Dorsolateral prefrontal cortex (tissue), 120 donors: ENCODE measurements at regions of chr11 and their contacts with region 1.

Region 1: GRCh38 chr11:58579192-58580129 is 598 bp downstream of the ZFP91 start:
- DNase-seq: peak; percentile 83 to 94 (median 91)
- H3K4me3 ChIP-seq: peak overlapping the region; percentile 63 to 99 (median 94)
- H3K27ac ChIP-seq: peak overlapping the region; percentile 92 to 100 (median 100)
- H3K27me3 ChIP-seq: no peaks in the 10 kb centered on the region
- CTCF ChIP-seq: peak; percentile 67 to 97 (median 87)

Region 2: DNA sequence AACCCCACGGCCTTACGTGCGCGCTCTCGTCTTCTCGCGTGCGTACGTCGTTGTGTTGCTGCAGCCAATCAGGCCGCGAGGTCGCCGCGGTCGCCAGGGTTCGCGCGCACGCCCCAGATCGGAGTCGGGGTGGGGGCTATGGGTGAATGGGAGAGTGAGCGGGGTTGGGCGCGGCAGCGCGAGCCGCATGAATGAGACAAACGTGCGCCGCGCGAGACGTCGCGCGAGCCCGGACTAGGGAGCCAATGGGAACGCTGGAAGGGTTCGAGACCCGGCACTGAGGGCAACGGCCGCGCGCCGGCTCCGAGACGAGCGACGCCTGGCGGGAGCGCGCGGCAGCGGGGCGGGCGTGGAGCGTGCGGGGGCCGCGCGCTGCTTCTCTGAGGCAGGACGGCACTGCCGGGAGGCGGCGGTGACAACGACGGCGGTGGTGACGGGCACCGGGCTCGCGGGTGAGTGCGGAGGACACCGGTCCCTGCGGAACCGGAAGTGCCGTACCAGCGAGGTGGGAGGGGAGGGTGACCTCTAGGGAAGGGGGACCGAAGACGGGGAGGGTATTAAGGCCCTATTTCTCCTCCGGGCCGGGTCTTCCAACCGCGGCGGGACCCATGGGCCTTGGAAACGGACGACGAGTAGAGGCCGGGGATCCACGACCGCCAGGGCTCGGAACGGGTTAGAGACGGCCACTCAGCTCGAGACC is 911.6 kb before region 1 on chr11 and contains the start of gene ZDHHC5:
- intact Hi-C with region 1: loop called (anchors 2 to 5 kb)
- DNase-seq: peak; percentile 98 to 100 (median 99)
- H3K4me3 ChIP-seq: peak within 1 kb of the TSS; percentile 73 to 100 (median 96)
- H3K27ac ChIP-seq: peak within 1 kb of the TSS; percentile 93 to 100 (median 99)
- H3K27me3 ChIP-seq: no peaks in the 10 kb centered on the region
- CTCF ChIP-seq: peak in 55 of 56 donors; percentile 19 to 80 (median 60)
- total RNA-seq, gene ZDHHC5: 21.3 to 46.9 (median 34.3) TPM

Region 3: DNA sequence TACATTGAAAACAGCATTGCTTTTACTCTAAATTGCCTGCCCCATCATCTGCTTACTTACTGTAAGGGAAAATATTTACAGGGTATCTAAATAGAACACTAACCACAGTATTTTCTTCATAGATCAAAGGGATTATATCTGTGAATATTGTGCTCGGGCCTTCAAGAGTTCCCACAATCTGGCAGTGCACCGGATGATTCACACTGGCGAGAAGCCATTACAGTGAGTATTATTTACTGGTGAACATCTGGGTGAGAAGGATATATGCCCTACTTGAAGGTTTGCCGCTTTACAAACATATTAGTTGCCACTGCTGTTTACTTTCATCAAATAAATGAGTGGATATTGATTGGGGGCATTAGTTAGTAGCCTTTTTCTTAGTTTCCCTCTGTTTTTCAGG is 37.1 kb after region 1 on chr11:
- intact Hi-C with region 1: loop called in 1 of 2 experiments (anchors 5 kb)
- DNase-seq: no peak
- H3K4me3 ChIP-seq: no peak overlapping the region
- H3K27ac ChIP-seq: peak overlapping the region in 24 of 59 donors; percentile 4 to 84 (median 31)
- H3K27me3 ChIP-seq: no peaks in the 10 kb centered on the region
- CTCF ChIP-seq: no peak

Region 4: GRCh38 chr11:58647141-58647699 is 67.8 kb after region 1 on chr11:
- intact Hi-C with region 1: no loop called
- DNase-seq: no peak
- H3K4me3 ChIP-seq: no peak overlapping the region
- H3K27ac ChIP-seq: no peak overlapping the region
- H3K27me3 ChIP-seq: no peaks in the 10 kb centered on the region
- CTCF ChIP-seq: no peak

Region 5: DNA sequence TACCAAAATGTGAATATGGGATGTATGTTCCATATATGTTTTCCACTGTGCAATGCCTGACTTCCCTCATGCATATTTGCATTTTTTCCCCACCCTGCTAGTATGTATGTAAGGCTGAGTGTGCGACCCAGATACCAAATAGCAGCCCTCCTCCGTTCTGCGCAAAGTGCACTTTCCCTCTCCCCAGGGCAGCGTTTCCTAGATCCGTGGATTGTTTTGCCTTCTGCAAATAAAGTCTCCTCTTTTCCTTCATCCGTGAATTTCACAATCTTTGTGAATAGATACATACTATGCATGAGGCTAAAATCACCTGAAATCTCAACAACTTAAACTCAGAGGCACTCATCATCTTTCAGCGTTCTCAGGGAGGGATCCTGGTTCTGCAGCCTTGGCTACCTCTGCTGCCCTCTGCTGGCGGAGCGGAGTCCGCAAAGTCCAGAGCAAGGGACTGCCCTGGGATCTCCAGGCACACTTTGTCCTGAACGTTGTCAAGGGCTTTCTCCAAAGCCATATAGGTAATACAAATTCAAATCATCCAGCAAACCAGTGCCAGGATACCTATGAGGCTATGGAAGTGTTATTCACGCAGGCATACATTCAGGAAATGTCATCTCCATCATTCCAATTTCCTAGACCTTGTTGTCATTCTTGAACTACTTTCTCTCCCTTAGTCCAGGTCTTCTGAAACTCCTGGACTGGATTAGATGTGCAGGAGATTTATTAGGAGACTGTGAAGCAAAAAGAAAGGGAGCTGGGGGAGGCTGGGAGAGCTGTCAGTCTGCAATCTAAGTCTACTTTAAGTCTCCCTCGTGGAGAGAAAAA is 96.1 kb after region 1 on chr11:
- intact Hi-C with region 1: loop called (anchors 5 to 10 kb)
- DNase-seq: peak; percentile 44 to 86 (median 78)
- H3K4me3 ChIP-seq: peak overlapping the region in 1 of 59 donors; percentile 15
- H3K27ac ChIP-seq: no peak overlapping the region
- H3K27me3 ChIP-seq: peaks cover 0 to 16% (median 6%) of the 10 kb centered on the region in 45 donors
- CTCF ChIP-seq: peak; percentile 56 to 94 (median 88)

Region 6: GRCh38 chr11:58900479-58901420 is 321.3 kb after region 1 on chr11:
- intact Hi-C with region 1: loop called in 1 of 2 experiments (anchors 10 kb)
- DNase-seq: peak; percentile 17 to 87 (median 72)
- H3K4me3 ChIP-seq: peak overlapping the region in 47 of 59 donors; percentile 8 to 61 (median 41)
- H3K27ac ChIP-seq: no peak overlapping the region
- H3K27me3 ChIP-seq: peaks cover 0 to 7% (median 0%) of the 10 kb centered on the region in 45 donors
- CTCF ChIP-seq: peak in 55 of 56 donors; percentile 29 to 66 (median 54)